CD8-positive, alpha-beta T cell (primary cell): ENCODE measurements at regions of chrX and their contacts with region 1.

Region 1: GRCh38 chrX:129823115-129823514 is 20.6 kb downstream of the ZDHHC9 start:
- DNase-seq: peak; percentile 4 to 79 (median 61)
- ATAC-seq: peak; percentile 78
- H3K4me3 ChIP-seq: no peak overlapping the region
- H3K4me3 Mint-ChIP-seq: no peak overlapping the region
- H3K27ac ChIP-seq: no peak overlapping the region
- H3K27ac Mint-ChIP-seq: no peak overlapping the region
- H3K4me1 ChIP-seq: no peaks in the 10 kb centered on the region
- H3K4me1 Mint-ChIP-seq: peaks cover 13% of the 10 kb centered on the region
- H3K27me3 ChIP-seq: no peaks in the 10 kb centered on the region
- H3K27me3 Mint-ChIP-seq: no peaks in the 10 kb centered on the region
- CTCF ChIP-seq: peak; percentile 49

Region 2: DNA sequence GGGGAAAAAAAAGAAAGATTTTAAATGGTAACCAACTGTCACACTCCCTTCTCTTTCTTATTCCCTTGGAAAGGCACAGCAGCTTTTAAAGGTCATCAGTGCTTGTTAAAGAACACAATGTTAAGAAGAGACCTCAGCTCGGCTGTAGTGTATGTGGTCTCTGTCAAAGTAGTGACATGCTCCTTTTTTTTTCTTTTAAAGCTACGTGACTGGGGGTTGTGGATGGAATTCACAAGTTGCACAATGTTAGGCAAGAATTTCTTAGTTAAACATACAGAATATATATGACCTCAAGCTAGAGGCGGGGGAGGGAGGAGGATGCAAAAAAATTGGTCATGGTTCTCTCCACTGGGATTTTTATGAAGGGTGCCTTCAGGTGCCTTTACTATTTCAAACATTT is 237.4 kb before region 1 on chrX:
- CTCF ChIA-PET with region 1: no interaction called
- POLR2A ChIA-PET with region 1: no interaction called
- intact Hi-C with region 1: no loop called
- DNase-seq: no peak
- ATAC-seq: no peak
- H3K4me3 ChIP-seq: no peak overlapping the region
- H3K4me3 Mint-ChIP-seq: no peak overlapping the region
- H3K27ac ChIP-seq: no peak overlapping the region
- H3K27ac Mint-ChIP-seq: no peak overlapping the region
- H3K4me1 ChIP-seq: no peaks in the 10 kb centered on the region
- H3K4me1 Mint-ChIP-seq: no peaks in the 10 kb centered on the region
- H3K27me3 ChIP-seq: no peaks in the 10 kb centered on the region
- H3K27me3 Mint-ChIP-seq: no peaks in the 10 kb centered on the region
- CTCF ChIP-seq: no peak

Region 3: DNA sequence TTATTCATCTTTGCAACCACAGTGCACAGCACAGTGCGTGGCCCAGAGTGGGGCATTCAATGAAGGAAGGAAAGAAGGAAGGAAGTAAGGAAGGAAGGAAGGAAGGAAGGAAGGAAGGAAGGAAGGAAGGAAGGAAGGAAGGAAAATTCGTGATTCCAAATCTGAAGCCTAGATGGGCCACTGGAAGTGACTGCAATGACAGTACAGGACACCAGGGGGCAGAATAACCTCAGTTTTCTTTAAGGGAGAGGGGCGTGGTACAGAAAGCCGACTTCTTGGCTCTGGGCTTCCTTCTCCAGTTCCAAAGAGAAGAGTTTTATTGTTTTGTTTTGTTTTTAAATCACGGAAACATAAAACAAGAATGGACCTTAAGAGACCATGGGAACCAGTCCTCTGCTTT is 216.2 kb before region 1 on chrX:
- CTCF ChIA-PET with region 1: interaction called, 3 read pairs
- POLR2A ChIA-PET with region 1: no interaction called
- intact Hi-C with region 1: loop called (anchors 1 to 2 kb)
- DNase-seq: peak; percentile 9 to 72 (median 60)
- ATAC-seq: peak; percentile 63
- H3K4me3 ChIP-seq: no peak overlapping the region
- H3K4me3 Mint-ChIP-seq: no peak overlapping the region
- H3K27ac ChIP-seq: no peak overlapping the region
- H3K27ac Mint-ChIP-seq: no peak overlapping the region
- H3K4me1 ChIP-seq: peaks cover 15% of the 10 kb centered on the region
- H3K4me1 Mint-ChIP-seq: peaks cover 19% of the 10 kb centered on the region
- H3K27me3 ChIP-seq: no peaks in the 10 kb centered on the region
- H3K27me3 Mint-ChIP-seq: no peaks in the 10 kb centered on the region
- CTCF ChIP-seq: peak; percentile 54

Region 4: DNA sequence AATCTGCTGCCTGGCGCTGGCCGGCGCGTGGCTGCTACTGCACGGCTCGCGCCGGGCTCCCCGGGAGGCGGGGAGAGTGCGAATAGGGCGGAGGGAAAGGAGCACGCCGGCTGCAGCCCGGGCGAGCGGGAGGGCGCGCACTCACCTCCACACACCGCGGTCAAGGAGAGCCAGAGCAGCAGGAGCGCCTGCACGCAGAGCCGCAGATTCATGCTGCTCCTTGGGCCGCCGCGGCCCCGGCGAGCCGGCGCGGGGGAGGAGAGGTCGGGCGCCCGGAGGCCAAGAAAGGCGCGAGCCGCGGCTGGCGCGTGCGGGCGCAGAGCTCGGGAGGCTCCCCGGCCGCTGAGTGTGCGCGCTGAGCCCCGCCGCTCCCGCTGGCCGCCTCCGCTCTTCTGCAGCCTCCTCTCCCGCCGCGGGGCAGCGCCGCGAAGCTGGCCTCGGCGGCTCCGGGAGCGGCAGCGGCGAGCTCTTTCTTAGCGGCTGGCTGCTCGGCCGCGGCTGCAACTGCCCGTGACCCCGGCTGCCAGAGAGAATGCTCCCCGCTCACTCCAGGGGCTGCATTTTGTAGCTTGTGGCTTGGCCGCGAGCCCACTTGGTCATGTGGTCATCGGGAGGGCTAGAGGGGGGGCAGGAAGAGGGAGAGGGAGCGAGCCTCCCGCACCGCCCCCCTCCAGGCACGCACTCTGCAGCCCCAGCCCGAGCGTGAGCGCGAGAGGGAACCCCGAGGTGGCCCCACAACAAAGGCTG is 168.5 kb before region 1 on chrX and contains the start of gene APLN:
- CTCF ChIA-PET with region 1: interaction called, 15 read pairs
- POLR2A ChIA-PET with region 1: no interaction called
- intact Hi-C with region 1: loop called (anchors 1 to 2 kb)
- DNase-seq: peak in 2 of 9 experiments; percentile 29 to 33
- ATAC-seq: peak; percentile 52
- H3K4me3 ChIP-seq: peak within 1 kb of the TSS; percentile 15 to 26
- H3K4me3 Mint-ChIP-seq: peak within 1 kb of the TSS; percentile 68
- H3K27ac ChIP-seq: no peak within 1 kb of the TSS
- H3K27ac Mint-ChIP-seq: no peak within 1 kb of the TSS
- H3K4me1 ChIP-seq: peaks cover 10% of the 10 kb centered on the region
- H3K4me1 Mint-ChIP-seq: peaks cover 7% of the 10 kb centered on the region
- H3K27me3 ChIP-seq: peaks cover 0 to 3% of the 10 kb centered on the region in 2 experiments
- H3K27me3 Mint-ChIP-seq: peaks cover 12% of the 10 kb centered on the region
- CTCF ChIP-seq: no peak
- total RNA-seq, gene APLN: not detected

Region 5: GRCh38 chrX:129726307-129727111 is 96.6 kb before region 1 on chrX:
- CTCF ChIA-PET with region 1: interaction called, 10 read pairs
- POLR2A ChIA-PET with region 1: no interaction called
- intact Hi-C with region 1: no loop called
- DNase-seq: peak in 5 of 9 experiments; percentile 8 to 52 (median 42)
- ATAC-seq: no peak
- H3K4me3 ChIP-seq: no peak overlapping the region
- H3K4me3 Mint-ChIP-seq: no peak overlapping the region
- H3K27ac ChIP-seq: no peak overlapping the region
- H3K27ac Mint-ChIP-seq: no peak overlapping the region
- H3K4me1 ChIP-seq: no peaks in the 10 kb centered on the region
- H3K4me1 Mint-ChIP-seq: peaks cover 43% of the 10 kb centered on the region
- H3K27me3 ChIP-seq: no peaks in the 10 kb centered on the region
- H3K27me3 Mint-ChIP-seq: no peaks in the 10 kb centered on the region
- CTCF ChIP-seq: peak; percentile 39

Region 6: GRCh38 chrX:129759576-129760061 is 63.5 kb before region 1 on chrX:
- CTCF ChIA-PET with region 1: interaction called, 12 read pairs
- POLR2A ChIA-PET with region 1: no interaction called
- intact Hi-C with region 1: loop called (anchors 1 to 2 kb)
- DNase-seq: peak in 6 of 9 experiments; percentile 55 to 84 (median 66)
- ATAC-seq: peak; percentile 79
- H3K4me3 ChIP-seq: no peak overlapping the region
- H3K4me3 Mint-ChIP-seq: peak overlapping the region; percentile 29
- H3K27ac ChIP-seq: peak overlapping the region in 1 of 2 experiments; percentile 56
- H3K27ac Mint-ChIP-seq: peak overlapping the region; percentile 81
- H3K4me1 ChIP-seq: peaks cover 60% of the 10 kb centered on the region
- H3K4me1 Mint-ChIP-seq: peaks cover 64% of the 10 kb centered on the region
- H3K27me3 ChIP-seq: no peaks in the 10 kb centered on the region
- H3K27me3 Mint-ChIP-seq: no peaks in the 10 kb centered on the region
- CTCF ChIP-seq: no peak

Region 7: GRCh38 chrX:129900054-129900453 is 76.9 kb after region 1 on chrX:
- CTCF ChIA-PET with region 1: no interaction called
- POLR2A ChIA-PET with region 1: no interaction called
- intact Hi-C with region 1: no loop called
- DNase-seq: no peak
- ATAC-seq: no peak
- H3K4me3 ChIP-seq: no peak overlapping the region
- H3K4me3 Mint-ChIP-seq: no peak overlapping the region
- H3K27ac ChIP-seq: no peak overlapping the region
- H3K27ac Mint-ChIP-seq: no peak overlapping the region
- H3K4me1 ChIP-seq: no peaks in the 10 kb centered on the region
- H3K4me1 Mint-ChIP-seq: no peaks in the 10 kb centered on the region
- H3K27me3 ChIP-seq: no peaks in the 10 kb centered on the region
- H3K27me3 Mint-ChIP-seq: no peaks in the 10 kb centered on the region
- CTCF ChIP-seq: no peak